GM12878 (cell line): ENCODE measurements at regions of chr11 and their contacts with region 1.

Region 1: GRCh38 chr11:116787786-116788486 is at the start of gene ZPR1:
- DNase-seq: no peak
- ATAC-seq: peak; percentile 86
- H3K4me3 ChIP-seq: peak within 1 kb of the TSS; percentile 96
- H3K27ac ChIP-seq: peak within 1 kb of the TSS; percentile 72
- H3K4me1 ChIP-seq: peaks cover 18% of the 10 kb centered on the region
- H3K27me3 ChIP-seq: no peaks in the 10 kb centered on the region
- CTCF ChIP-seq: no peak
- EP300 ChIP-seq: no peak
- POLR2A ChIP-seq: peak; percentile 96
- RAD21 ChIP-seq: no peak
- polyA plus RNA-seq, gene ZPR1: 9.3 to 20.4 TPM

Region 2: DNA sequence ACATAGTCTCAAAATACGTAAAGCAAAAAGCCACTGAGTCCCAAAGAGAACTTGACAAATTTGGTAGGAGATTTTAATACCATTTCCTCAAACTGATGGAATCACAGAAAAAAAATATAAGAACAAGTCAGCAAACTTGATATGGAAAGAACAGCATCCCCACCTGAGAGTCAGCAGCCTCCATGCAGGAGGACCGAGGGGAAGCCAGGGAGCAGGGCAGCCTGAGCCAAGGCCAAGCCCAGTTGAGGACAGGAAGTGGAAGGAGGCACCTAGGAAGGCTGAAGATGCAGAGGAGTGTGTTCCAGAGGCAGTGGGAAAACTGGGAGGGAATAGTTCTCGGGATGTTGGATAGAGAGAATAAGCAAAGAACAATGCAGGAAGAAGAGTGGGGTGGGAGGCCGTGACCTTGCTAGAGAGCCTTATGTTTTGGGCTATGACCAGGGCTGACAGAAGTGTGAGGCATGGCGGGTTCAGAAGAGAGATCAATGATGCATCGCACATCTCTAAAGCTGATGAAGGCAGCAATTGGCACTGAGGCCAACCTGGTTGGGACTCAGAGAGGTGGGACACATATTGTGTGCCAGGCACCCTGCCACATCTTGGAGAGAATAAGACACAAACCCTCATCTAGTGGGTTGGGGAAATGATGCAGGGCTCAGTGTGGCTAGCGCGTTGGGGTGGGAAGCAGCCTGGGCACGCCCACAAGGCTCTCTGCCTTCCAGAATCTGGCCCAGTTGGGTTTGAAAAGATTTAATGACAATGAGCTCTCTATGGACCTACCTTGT is 19.9 kb after region 1 on chr11:
- CTCF ChIA-PET with region 1: interaction called, 12 read pairs
- POLR2A ChIA-PET with region 1: no interaction called
- RAD21 ChIA-PET with region 1: no interaction called
- SMC1A ChIA-PET with region 1: interaction called, 3 read pairs
- in situ Hi-C with region 1: no loop called
- intact Hi-C with region 1: no loop called
- DNase-seq: no peak
- ATAC-seq: no peak
- H3K4me3 ChIP-seq: no peak overlapping the region
- H3K27ac ChIP-seq: no peak overlapping the region
- H3K4me1 ChIP-seq: no peaks in the 10 kb centered on the region
- H3K27me3 ChIP-seq: no peaks in the 10 kb centered on the region; a peak in 1 of 4 replicates
- CTCF ChIP-seq: no peak
- EP300 ChIP-seq: no peak
- POLR2A ChIP-seq: no peak
- RAD21 ChIP-seq: no peak

Region 3: GRCh38 chr11:116821050-116821918 is 33.3 kb after region 1 on chr11:
- CTCF ChIA-PET with region 1: interaction called, 10 read pairs
- POLR2A ChIA-PET with region 1: interaction called, 3 read pairs
- RAD21 ChIA-PET with region 1: interaction called, 3 read pairs
- SMC1A ChIA-PET with region 1: interaction called, 4 read pairs
- in situ Hi-C with region 1: no loop called
- intact Hi-C with region 1: no loop called
- DNase-seq: no peak
- ATAC-seq: no peak
- H3K4me3 ChIP-seq: no peak overlapping the region
- H3K27ac ChIP-seq: no peak overlapping the region
- H3K4me1 ChIP-seq: no peaks in the 10 kb centered on the region
- H3K27me3 ChIP-seq: no peaks in the 10 kb centered on the region
- CTCF ChIP-seq: no peak
- EP300 ChIP-seq: no peak
- POLR2A ChIP-seq: no peak
- RAD21 ChIP-seq: no peak

Region 4: DNA sequence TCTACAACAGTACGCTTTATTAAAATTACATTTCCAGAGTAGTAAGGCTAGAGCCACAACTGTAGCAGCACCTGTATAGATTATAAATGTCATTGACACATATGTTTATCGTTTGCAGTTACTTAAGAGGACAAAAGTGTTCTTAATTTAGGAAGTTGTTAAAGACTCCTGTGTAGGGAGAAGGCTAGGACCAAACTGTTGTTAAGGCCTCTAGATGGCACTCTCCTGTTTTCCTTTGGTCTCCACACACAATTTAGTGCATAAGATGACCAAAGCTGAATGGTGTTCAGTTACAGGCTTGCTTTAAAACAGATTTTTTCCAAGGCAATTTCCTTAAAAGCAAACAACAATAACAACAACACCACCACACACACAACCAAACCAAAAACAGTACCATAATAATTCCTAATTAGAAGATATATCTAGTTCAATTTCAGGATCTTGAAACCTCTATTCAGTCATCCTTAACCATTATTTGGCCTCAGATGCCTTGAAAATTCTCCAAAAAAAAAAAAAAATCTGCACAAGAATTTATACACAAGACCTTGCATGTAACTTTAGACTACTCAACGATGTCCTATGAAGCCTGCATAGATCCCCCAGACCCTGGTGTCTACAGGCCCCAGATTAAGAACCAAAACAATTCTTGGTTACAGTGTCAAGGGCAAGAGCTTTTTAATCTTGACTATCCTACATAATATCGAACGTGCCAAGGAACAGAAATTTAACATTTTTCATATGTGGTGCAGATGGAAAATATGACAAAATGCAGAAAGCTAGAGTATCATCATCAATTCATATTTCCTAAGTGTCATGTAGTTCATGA is 92.1 kb after region 1 on chr11:
- CTCF ChIA-PET with region 1: interaction called, 14 read pairs
- POLR2A ChIA-PET with region 1: no interaction called
- RAD21 ChIA-PET with region 1: interaction called, 4 read pairs
- SMC1A ChIA-PET with region 1: interaction called, 3 read pairs
- in situ Hi-C with region 1: no loop called
- intact Hi-C with region 1: no loop called
- DNase-seq: peak; percentile 42
- ATAC-seq: peak; percentile 96
- H3K4me3 ChIP-seq: no peak overlapping the region
- H3K27ac ChIP-seq: no peak overlapping the region
- H3K4me1 ChIP-seq: no peaks in the 10 kb centered on the region
- H3K27me3 ChIP-seq: no peaks in the 10 kb centered on the region
- CTCF ChIP-seq: peak; percentile 62 to 72 (median 71); a peak in 5 of 6 replicates
- EP300 ChIP-seq: no peak
- POLR2A ChIP-seq: no peak
- RAD21 ChIP-seq: peak; percentile 87

Region 5: GRCh38 chr11:116948391-116948790 is 160.5 kb after region 1 on chr11:
- CTCF ChIA-PET with region 1: no interaction called
- POLR2A ChIA-PET with region 1: no interaction called
- RAD21 ChIA-PET with region 1: no interaction called
- SMC1A ChIA-PET with region 1: no interaction called
- in situ Hi-C with region 1: no loop called
- intact Hi-C with region 1: no loop called
- DNase-seq: no peak
- ATAC-seq: peak; percentile 60
- H3K4me3 ChIP-seq: no peak overlapping the region
- H3K27ac ChIP-seq: no peak overlapping the region
- H3K4me1 ChIP-seq: no peaks in the 10 kb centered on the region; the same call in 1 of the 2 replicates
- H3K27me3 ChIP-seq: no peaks in the 10 kb centered on the region
- CTCF ChIP-seq: no peak
- EP300 ChIP-seq: no peak
- POLR2A ChIP-seq: no peak
- RAD21 ChIP-seq: no peak